B cell (primary cell): ENCODE measurements at regions of chr17 and their contacts with region 1.

Region 1: DNA sequence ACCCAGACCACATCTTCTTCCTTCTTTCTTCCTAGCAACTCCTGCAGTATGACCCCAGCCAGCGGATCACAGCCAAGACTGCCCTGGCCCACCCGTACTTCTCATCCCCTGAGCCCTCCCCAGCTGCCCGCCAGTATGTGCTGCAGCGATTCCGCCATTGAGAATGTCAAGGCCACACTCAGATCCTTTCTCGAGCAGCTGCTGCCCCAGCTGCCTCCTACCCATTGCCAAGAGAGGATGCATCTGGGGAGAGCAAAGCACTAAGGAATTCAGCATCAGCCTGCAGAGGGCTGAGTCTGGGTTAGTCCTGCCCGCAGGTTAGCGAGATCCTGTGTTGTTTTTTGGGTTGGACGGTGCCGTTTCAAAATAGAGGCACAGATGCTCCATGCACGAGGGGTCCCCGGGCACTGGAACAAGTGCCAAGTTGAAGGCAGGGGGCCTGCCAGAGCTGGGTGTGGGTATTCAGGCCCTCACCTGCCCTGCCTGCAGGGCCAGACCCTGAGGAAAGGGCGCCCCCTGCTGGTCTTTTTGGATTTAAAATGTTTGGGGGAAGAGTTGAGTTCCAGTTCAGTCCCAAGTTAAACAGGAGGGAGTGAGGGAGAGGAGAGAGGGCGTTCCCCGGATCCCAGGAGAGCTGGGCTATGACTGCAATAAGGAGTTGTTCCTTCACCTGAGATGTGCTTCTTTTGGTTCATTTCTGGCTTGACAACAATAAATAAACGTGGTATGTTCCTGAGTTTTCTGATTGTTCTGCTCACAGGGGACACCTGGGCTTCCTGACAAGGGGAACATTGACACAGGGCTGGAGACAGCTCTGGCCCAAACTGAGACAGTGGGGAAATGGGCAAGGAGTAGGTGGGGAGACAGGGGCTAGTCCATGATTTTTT is 4.9 kb downstream of the CDK3 start:
- DNase-seq: peak; percentile 85
- ATAC-seq: peak; percentile 80
- H3K4me3 ChIP-seq: no peak overlapping the region
- H3K4me3 Mint-ChIP-seq: no peak overlapping the region
- H3K27ac ChIP-seq: no peak overlapping the region
- H3K27ac Mint-ChIP-seq: peak overlapping the region; percentile 56
- H3K4me1 ChIP-seq: peaks cover 0 to 3% of the 10 kb centered on the region in 2 donors
- H3K4me1 Mint-ChIP-seq: no peaks in the 10 kb centered on the region
- H3K27me3 ChIP-seq: no peaks in the 10 kb centered on the region
- H3K27me3 Mint-ChIP-seq: no peaks in the 10 kb centered on the region
- CTCF ChIP-seq: peak; percentile 85

Region 2: DNA sequence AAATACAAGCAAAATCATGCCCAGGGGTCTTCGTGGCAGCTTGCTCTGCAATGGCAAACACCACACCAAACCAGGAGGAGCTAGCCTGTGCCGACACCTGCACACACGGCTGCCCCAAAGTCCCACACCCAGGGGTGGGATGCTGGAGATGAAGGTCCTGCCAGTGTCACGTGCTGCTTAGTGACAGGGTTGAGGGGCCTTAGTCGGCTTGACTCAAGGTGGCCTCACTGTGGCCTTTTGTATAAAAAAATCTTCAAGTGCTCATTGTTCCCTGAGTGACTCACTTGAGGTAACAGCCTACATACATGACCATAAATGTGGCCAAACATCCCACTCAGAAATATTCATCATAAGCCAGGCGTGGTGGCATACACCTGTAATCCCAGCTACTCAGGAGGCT is 116.1 kb before region 1 on chr17:
- CTCF ChIA-PET with region 1: no interaction called
- POLR2A ChIA-PET with region 1: no interaction called
- intact Hi-C with region 1: no loop called
- DNase-seq: no peak
- ATAC-seq: no peak
- H3K4me3 ChIP-seq: no peak overlapping the region
- H3K4me3 Mint-ChIP-seq: no peak overlapping the region
- H3K27ac ChIP-seq: no peak overlapping the region
- H3K27ac Mint-ChIP-seq: no peak overlapping the region
- H3K4me1 ChIP-seq: no peaks in the 10 kb centered on the region
- H3K4me1 Mint-ChIP-seq: peaks cover 8% of the 10 kb centered on the region
- H3K27me3 ChIP-seq: no peaks in the 10 kb centered on the region
- H3K27me3 Mint-ChIP-seq: no peaks in the 10 kb centered on the region
- CTCF ChIP-seq: no peak

Region 3: DNA sequence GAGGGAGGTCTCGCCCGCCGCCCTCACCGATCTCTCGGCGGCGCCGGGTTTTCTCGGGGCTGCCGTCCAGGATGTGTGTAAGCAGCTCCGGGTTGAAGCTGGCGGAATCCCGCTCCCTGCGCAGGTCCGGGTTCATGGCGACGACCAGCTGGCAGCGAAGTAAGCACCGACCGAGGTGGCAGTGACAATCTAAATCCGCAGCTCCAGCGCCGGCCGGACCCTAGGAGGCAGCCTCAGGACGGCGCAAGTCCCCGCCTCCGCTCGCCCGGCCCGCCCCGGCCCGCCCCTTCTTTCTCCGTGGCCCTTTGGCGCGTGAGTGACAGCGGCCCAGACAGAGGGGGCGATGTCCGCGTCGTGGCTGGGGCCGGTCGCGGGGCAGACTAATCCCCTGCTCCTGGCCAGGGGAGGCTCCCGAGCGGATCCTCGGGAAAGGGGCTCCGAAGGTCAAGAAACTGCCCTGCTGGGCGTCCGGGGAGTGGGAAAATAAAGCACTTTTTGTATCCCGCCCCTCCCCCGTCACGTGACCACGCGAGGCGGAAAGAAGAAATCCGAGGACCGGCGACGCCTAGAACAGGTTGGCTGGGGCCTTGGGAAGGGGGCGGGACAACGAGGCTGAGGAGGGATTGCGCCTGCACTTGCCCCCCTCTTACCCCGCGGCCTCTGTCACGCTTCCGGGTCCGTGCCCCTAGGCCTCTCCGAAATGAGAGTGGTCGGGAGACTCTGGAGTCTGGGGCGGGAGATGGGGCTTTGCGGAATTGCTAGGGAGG is 26.4 kb before region 1 on chr17 and contains the starts of genes ACOX1 and TEN1:
- CTCF ChIA-PET with region 1: interaction called, 5 read pairs
- POLR2A ChIA-PET with region 1: interaction called, 3 read pairs
- intact Hi-C with region 1: loop called (anchors 1 kb)
- DNase-seq: peak; percentile 98
- ATAC-seq: peak; percentile 93
- H3K4me3 ChIP-seq: peak within 1 kb of the TSS; percentile 73 to 100 (median 87)
- H3K4me3 Mint-ChIP-seq: peak within 1 kb of the TSS; percentile 94
- H3K27ac ChIP-seq: peak within 1 kb of the TSS; percentile 92 to 97
- H3K27ac Mint-ChIP-seq: peak within 1 kb of the TSS; percentile 98
- H3K4me1 ChIP-seq: peaks cover 9 to 19% of the 10 kb centered on the region in 2 donors
- H3K4me1 Mint-ChIP-seq: peaks cover 44% of the 10 kb centered on the region
- H3K27me3 ChIP-seq: no peaks in the 10 kb centered on the region
- H3K27me3 Mint-ChIP-seq: no peaks in the 10 kb centered on the region
- CTCF ChIP-seq: peak; percentile 35
- total RNA-seq, gene ACOX1: 31.2 and 38.8 TPM in 2 replicates
- total RNA-seq, gene TEN1: 19.8 and 25.5 TPM in 2 replicates

Region 4: GRCh38 chr17:76032073-76032779 is 26.7 kb after region 1 on chr17:
- CTCF ChIA-PET with region 1: no interaction called
- POLR2A ChIA-PET with region 1: no interaction called
- intact Hi-C with region 1: no loop called
- DNase-seq: no peak
- ATAC-seq: no peak
- H3K4me3 ChIP-seq: no peak overlapping the region
- H3K4me3 Mint-ChIP-seq: no peak overlapping the region
- H3K27ac ChIP-seq: no peak overlapping the region
- H3K27ac Mint-ChIP-seq: no peak overlapping the region
- H3K4me1 ChIP-seq: peaks cover 8 to 9% of the 10 kb centered on the region in 2 donors
- H3K4me1 Mint-ChIP-seq: peaks cover 8% of the 10 kb centered on the region
- H3K27me3 ChIP-seq: peaks cover 0 to 2% (median 0%) of the 10 kb centered on the region in 4 experiments
- H3K27me3 Mint-ChIP-seq: no peaks in the 10 kb centered on the region
- CTCF ChIP-seq: no peak

Region 5: GRCh38 chr17:76983075-76983775 is 977.7 kb after region 1 on chr17:
- CTCF ChIA-PET with region 1: no interaction called
- POLR2A ChIA-PET with region 1: no interaction called
- intact Hi-C with region 1: no loop called
- DNase-seq: no peak
- ATAC-seq: peak; percentile 37
- H3K4me3 ChIP-seq: no peak overlapping the region
- H3K4me3 Mint-ChIP-seq: peak overlapping the region; percentile 2
- H3K27ac ChIP-seq: no peak overlapping the region
- H3K27ac Mint-ChIP-seq: peak overlapping the region; percentile 37
- H3K4me1 ChIP-seq: peaks cover 24 to 30% of the 10 kb centered on the region in 2 donors
- H3K4me1 Mint-ChIP-seq: peaks cover 25% of the 10 kb centered on the region
- H3K27me3 ChIP-seq: peaks cover 0 to 31% (median 5%) of the 10 kb centered on the region in 4 experiments
- H3K27me3 Mint-ChIP-seq: peaks cover 24% of the 10 kb centered on the region
- CTCF ChIP-seq: no peak